KBM-7 (cell line): ENCODE measurements at regions of chr22 and their contacts with region 1.

Region 1: DNA sequence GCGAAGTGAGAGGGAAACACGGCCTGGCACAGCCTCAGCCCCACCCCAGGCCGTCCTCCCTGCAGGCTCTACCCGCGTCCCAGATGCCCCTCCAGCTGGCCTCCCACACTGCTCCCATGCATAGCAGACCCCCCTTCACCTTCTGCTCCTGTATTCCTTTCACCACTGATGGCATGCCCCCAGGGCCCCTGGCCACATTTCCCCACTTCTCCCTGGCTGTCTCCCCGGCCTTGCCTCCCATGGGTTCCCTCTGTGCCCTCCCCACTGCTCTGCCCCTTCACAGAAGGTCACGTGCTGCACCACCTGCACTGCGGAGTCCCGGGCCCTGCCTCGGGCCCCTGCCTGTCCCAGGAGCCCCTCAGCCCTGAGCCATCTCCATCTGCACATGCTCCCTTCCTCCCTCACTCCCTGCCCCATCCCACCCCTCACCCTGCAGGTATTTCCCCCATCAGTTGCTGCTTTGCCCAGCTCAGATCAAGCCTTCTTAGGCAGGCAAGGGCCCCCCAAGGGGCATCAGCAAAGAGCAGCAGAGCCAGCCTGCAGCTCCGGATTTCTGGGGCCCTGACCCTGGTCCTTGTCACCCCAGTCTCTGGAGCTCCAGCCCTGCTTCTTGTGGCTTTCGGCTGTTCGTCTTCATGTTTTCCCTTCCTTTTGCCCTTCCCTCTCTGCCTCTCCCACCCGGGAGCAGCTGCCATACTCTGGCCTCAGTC is 46.4 kb downstream of the GAB4 start:
- DNase-seq: no peak

Region 2: DNA sequence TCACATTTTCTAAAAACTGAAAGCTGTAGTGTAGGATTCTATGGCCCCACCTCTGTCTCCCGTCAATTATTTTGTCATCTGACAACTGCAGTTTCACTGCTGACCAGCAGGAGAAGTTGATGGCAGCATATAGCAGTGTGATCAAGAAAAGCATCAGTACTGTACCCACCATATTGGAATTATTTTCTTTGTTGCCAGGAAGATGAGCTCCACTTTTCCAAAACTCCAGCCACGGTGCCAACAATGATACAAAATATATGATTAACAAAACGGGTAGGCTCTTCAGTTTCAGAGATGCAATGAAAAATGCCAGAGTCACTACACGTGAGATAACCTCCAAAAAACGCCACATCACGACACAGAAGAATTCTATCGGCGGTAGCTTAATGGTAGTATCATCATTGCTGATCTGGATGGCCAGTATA is 177.7 kb before region 1 on chr22:
- in situ Hi-C with region 1: no loop called
- DNase-seq: peak; percentile 35

Region 3: GRCh38 chr22:17047656-17048055 is 86.0 kb after region 1 on chr22:
- in situ Hi-C with region 1: loop called (anchors 10 kb)
- DNase-seq: no peak